ENCODE measurements at regions of chr17 and their contacts with region 1.

Region 1: DNA sequence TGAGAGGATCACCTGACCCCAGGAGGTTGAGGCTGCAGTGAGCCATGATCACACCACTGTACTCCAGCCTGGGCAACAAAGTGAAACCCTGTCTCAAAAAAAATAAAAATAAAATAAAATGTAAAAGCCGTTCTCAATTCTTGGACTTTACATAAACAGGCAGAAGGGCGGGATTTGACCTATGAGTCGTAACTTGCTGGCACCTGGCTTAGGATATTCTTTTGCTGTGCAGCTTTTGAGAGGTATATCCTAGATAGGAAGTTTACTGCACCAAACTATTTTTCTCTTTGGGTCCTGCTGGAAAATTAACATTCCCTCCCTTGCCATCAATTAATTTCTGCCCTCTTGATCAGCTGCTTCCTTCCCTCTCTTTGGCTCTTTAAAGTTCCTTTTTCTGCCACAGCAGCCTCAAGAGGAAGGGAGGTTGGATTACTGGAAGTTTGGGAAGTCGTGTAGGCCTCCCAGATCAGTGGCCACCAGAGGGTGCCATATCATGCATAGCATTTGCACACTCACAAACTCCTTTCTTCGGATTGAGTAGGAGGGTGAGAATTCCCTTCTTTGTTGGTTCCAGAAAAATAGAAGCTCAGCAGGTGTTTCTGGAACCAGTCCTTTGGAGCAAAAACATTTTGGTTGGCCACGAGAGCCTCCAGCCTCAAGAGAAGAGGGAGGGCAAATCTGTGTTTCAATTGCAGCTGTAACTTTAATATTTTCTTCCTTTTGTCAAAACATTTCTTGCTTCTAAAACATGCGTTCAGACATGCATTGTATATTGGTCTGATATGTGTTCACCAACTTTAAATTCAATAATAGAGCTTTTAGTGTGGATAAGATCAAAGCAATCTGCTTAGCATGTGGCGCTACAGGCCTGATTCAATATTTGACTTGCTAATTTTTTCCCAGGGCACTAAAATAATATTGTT is 147.3 kb downstream of the CCDC182 start:
- DNase-seq: no peak
- ATAC-seq: no peak
- H3K4me3 Mint-ChIP-seq: no peak overlapping the region
- H3K27ac Mint-ChIP-seq: peak overlapping the region; percentile 46
- H3K4me1 Mint-ChIP-seq: peaks cover 33% of the 10 kb centered on the region
- H3K27me3 Mint-ChIP-seq: no peaks in the 10 kb centered on the region
- CTCF ChIP-seq: peak; percentile 16

Region 2: GRCh38 chr17:56034201-56034635 is 1563.6 kb before region 1 on chr17:
- CTCF ChIA-PET with region 1: no interaction called
- POLR2A ChIA-PET with region 1: no interaction called
- intact Hi-C with region 1: no loop called
- DNase-seq: no peak
- ATAC-seq: no peak
- H3K4me3 Mint-ChIP-seq: no peak overlapping the region
- H3K27ac Mint-ChIP-seq: no peak overlapping the region
- H3K4me1 Mint-ChIP-seq: no peaks in the 10 kb centered on the region
- H3K27me3 Mint-ChIP-seq: peaks cover 1% of the 10 kb centered on the region
- CTCF ChIP-seq: no peak

Region 3: DNA sequence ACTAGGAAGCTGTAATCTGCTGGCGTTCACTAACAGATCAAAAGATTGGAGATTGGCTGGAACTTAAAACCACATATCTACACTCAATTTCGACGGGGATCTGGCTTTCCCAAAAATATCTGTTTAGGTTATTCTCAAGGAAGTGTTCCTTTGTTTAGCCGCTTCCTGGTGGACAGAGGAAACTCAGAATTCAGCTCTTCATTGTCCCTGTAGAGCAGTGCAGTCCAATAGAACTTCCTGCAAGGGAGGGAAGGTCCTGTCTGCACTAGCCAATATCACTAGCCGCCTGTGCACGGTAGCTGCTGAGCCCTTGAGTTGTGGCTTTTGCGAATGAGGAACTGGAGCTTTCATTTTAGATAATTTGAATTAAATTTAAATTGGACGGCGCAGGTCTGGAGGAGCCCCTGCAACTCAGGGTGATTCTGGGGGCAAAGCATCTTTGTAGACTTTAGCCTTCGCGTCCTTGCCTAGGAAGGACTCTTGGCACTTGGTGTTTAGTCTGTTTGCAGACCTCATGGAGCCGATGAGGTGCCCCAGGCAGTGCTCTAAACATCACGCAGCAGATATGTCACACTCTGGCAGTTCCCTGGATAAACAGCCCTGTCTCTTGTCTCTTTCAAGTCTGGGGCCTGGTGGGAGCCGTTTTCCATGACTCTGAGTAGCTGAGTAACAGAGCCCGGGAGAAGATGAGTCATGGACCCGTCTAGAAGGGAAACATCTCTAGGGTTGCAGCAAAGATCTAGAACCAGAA is 25.1 kb after region 1 on chr17:
- CTCF ChIA-PET with region 1: interaction called, 24 read pairs
- POLR2A ChIA-PET with region 1: interaction called, 73 read pairs
- intact Hi-C with region 1: no loop called
- DNase-seq: no peak
- ATAC-seq: peak; percentile 82
- H3K4me3 Mint-ChIP-seq: peak overlapping the region; percentile 77
- H3K27ac Mint-ChIP-seq: peak overlapping the region; percentile 89
- H3K4me1 Mint-ChIP-seq: peaks cover 60% of the 10 kb centered on the region
- H3K27me3 Mint-ChIP-seq: no peaks in the 10 kb centered on the region
- CTCF ChIP-seq: no peak

Region 4: GRCh38 chr17:57636985-57637665 is 39.3 kb after region 1 on chr17:
- CTCF ChIA-PET with region 1: interaction called, 10 read pairs
- POLR2A ChIA-PET with region 1: no interaction called
- intact Hi-C with region 1: no loop called
- DNase-seq: no peak
- ATAC-seq: peak; percentile 72
- H3K4me3 Mint-ChIP-seq: peak overlapping the region; percentile 39
- H3K27ac Mint-ChIP-seq: peak overlapping the region; percentile 91
- H3K4me1 Mint-ChIP-seq: peaks cover 24% of the 10 kb centered on the region
- H3K27me3 Mint-ChIP-seq: no peaks in the 10 kb centered on the region
- CTCF ChIP-seq: no peak

Region 5: GRCh38 chr17:57662644-57663308 is 65.0 kb after region 1 on chr17:
- CTCF ChIA-PET with region 1: interaction called, 18 read pairs
- POLR2A ChIA-PET with region 1: no interaction called
- intact Hi-C with region 1: no loop called
- DNase-seq: peak; percentile 32
- ATAC-seq: peak; percentile 80
- H3K4me3 Mint-ChIP-seq: peak overlapping the region; percentile 73
- H3K27ac Mint-ChIP-seq: peak overlapping the region; percentile 61
- H3K4me1 Mint-ChIP-seq: peaks cover 41% of the 10 kb centered on the region
- H3K27me3 Mint-ChIP-seq: no peaks in the 10 kb centered on the region
- CTCF ChIP-seq: no peak

Region 6: GRCh38 chr17:57671667-57672632 is 74.2 kb after region 1 on chr17:
- CTCF ChIA-PET with region 1: interaction called, 95 read pairs
- POLR2A ChIA-PET with region 1: interaction called, 3 read pairs
- intact Hi-C with region 1: loop called (anchors 1 kb)
- DNase-seq: peak; percentile 56
- ATAC-seq: peak; percentile 91
- H3K4me3 Mint-ChIP-seq: no peak overlapping the region
- H3K27ac Mint-ChIP-seq: no peak overlapping the region
- H3K4me1 Mint-ChIP-seq: peaks cover 8% of the 10 kb centered on the region
- H3K27me3 Mint-ChIP-seq: no peaks in the 10 kb centered on the region
- CTCF ChIP-seq: peak; percentile 88

Region 7: GRCh38 chr17:57747221-57748017 is 149.6 kb after region 1 on chr17:
- CTCF ChIA-PET with region 1: interaction called, 16 read pairs
- POLR2A ChIA-PET with region 1: no interaction called
- intact Hi-C with region 1: loop called (anchors 1 kb)
- DNase-seq: no peak
- ATAC-seq: peak; percentile 74
- H3K4me3 Mint-ChIP-seq: no peak overlapping the region
- H3K27ac Mint-ChIP-seq: no peak overlapping the region
- H3K4me1 Mint-ChIP-seq: peaks cover 17% of the 10 kb centered on the region
- H3K27me3 Mint-ChIP-seq: peaks cover 7% of the 10 kb centered on the region
- CTCF ChIP-seq: no peak

Region 8: DNA sequence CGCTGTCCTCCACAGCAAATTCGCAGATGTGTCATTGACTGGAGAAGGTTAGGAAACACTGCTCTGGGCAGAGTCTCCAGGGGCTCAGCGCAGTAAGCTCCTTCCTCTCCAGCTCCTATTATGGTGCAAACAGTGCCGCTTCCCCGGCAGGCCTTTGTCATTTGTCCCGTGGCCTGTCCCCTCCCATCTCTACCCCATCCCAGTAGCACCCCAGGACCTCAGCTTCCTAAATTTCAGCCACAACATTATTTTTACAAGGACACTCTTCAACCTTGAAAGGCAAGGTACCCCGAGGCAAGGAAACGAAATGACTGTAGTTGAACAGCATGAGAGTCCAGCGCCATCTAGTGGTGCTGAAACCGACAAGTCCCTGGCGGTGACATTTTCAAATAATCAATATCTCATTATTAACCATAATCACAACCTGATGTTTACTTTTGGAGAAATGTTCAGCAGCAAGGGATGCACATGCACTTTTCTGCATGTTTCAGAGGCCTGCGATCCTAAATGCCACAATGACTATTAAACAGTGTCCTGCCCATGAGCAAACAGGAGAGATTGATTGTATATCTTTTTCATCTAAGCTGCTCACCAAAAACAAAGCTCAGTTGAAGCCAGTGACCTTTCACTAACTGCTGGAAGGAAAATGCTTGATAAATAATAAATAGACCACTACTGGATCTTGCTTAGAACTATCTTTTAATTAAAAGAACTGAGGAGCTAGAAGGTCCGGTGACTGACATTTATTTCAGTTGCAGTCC is 235.6 kb after region 1 on chr17:
- CTCF ChIA-PET with region 1: interaction called, 4 read pairs
- POLR2A ChIA-PET with region 1: no interaction called
- intact Hi-C with region 1: loop called (anchors 5 kb)
- DNase-seq: peak; percentile 37
- ATAC-seq: peak; percentile 74
- H3K4me3 Mint-ChIP-seq: no peak overlapping the region
- H3K27ac Mint-ChIP-seq: no peak overlapping the region
- H3K4me1 Mint-ChIP-seq: no peaks in the 10 kb centered on the region
- H3K27me3 Mint-ChIP-seq: no peaks in the 10 kb centered on the region
- CTCF ChIP-seq: peak; percentile 65